Posterior cingulate gyrus (tissue), 11 donors: ENCODE measurements at regions of chr3 and their contacts with region 1.

Region 1: GRCh38 chr3:190205739-190206138 is 85.0 kb upstream of the P3H2 start:
- DNase-seq: no peak

Region 2: DNA sequence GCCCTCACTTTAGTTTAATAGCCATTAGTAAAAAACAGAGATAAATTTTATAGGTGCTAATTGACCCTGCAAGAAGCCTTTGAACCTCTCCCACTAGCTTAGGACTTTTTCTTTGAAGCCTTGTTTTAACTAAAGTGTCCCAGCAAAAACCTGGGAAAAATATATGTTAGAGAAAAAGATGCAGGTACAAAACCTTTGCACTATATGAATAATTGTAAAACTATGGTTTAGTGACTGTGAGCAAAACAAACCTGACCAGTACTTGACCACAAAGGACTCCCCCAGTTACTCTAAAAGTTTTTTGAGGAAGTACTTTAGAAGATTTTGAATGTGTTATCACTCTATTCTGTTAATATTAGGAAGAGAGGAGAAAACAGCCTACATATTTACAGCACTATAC is 697.9 kb before region 1 on chr3:
- intact Hi-C with region 1: no loop called
- DNase-seq: no peak

Region 3: GRCh38 chr3:189967254-189967865 is 238.4 kb before region 1 on chr3:
- intact Hi-C with region 1: loop called (anchors 2 kb)
- DNase-seq: no peak

Region 4: DNA sequence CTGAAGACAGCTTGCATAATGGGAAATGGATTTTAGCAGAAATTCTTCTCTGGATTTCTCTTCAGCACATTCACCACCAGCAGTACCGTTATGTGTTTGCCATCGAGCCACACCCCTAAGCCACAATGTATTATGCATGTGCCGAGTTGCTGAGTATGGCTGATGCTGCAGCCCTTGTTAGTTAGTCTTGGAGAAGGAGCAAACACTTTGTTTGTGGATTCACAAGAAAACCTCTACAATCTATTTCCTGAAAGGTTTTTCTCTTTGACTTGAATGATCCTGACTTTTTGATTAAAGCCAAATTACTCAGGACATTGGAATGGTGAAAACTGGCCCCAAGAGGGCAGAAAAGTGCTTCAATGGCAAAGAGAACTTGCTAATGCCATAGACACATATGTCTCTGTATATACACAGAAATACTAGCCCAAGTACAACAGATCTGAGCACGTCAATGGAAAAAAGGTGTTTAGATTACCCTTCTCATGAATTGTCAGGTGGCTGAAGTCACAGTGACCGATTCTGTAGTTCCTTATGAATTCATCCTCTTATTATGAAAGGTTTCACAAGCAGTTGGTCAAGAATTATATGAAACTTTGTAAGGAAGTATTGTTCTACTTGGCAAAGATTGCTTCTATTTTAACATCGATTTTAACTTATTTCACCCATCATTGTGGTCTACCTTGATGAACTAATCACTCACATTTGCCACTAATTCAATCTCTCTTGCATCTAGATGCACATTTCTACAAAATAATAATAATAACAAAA is 188.0 kb before region 1 on chr3:
- intact Hi-C with region 1: loop called (anchors 5 kb)
- DNase-seq: peak in 3 of 10 donors; percentile 16 to 46 (median 22)